ENCODE measurements at regions of chr13 and their contacts with region 1.

Region 1: GRCh38 chr13:24741016-24741662 is 22.8 kb upstream of the RNF17 start:
- DNase-seq: peak in 1 of 2 experiments; percentile 17
- ATAC-seq: peak in 1 of 2 experiments; percentile 67; a peak in 3 of 6 replicates
- H3K4me3 ChIP-seq: no peak overlapping the region
- H3K27ac ChIP-seq: no peak overlapping the region
- H3K4me1 ChIP-seq: no peaks in the 10 kb centered on the region
- CTCF ChIP-seq: no peak
- EP300 ChIP-seq: no peak
- POLR2A ChIP-seq: no peak
- RAD21 ChIP-seq: no peak

Region 2: DNA sequence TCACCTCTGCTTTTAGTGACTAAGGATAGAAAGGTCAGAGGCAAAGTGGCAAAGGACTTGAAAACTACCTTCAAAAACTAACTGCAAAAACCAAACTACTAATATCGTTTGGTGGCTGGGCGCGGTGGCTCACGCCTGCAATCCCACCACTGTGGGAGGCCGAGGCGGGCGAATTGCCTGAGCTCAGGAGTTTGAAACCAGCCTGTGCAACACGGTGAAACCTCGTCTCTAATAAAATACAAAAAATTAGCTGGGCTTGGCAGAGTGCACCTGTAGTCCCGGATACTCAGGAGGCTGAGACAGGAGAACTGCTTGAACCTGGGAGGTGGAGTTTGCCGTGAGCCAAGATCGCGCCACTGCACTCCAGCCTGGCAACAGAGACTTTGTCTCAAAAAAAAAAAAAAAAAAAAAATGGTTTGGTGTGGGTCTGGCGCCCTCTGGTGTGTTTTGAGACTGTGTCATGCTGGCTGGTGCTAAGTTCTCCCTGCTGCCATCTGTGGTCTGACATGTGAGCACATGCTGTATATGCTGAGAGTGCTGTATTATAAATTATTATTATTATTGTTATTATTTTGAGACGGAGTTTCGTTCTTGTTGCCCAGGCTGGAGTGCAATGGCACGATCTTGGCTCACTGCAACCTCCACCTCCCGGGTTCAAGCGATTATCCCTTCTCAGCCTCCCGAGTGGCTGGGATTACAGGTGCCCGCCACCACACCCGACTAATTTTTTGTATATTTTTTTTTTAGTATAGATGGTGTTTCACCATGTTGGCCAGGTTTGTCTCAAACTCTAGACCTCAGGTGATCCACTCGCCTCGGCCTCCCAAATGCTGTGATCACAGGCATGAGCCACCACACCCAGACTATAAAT is 13.2 kb before region 1 on chr13:
- CTCF ChIA-PET with region 1: interaction called, 16 read pairs
- POLR2A ChIA-PET with region 1: no interaction called
- DNase-seq: peak; percentile 76 to 84
- ATAC-seq: peak; percentile 99 to 100
- H3K4me3 ChIP-seq: no peak overlapping the region
- H3K27ac ChIP-seq: no peak overlapping the region
- H3K4me1 ChIP-seq: no peaks in the 10 kb centered on the region
- CTCF ChIP-seq: peak; percentile 71
- EP300 ChIP-seq: no peak
- POLR2A ChIP-seq: no peak
- RAD21 ChIP-seq: peak; percentile 70